Common myeloid progenitor, CD34-positive (primary cell): ENCODE measurements at regions of chr10 and their contacts with region 1.

Region 1: DNA sequence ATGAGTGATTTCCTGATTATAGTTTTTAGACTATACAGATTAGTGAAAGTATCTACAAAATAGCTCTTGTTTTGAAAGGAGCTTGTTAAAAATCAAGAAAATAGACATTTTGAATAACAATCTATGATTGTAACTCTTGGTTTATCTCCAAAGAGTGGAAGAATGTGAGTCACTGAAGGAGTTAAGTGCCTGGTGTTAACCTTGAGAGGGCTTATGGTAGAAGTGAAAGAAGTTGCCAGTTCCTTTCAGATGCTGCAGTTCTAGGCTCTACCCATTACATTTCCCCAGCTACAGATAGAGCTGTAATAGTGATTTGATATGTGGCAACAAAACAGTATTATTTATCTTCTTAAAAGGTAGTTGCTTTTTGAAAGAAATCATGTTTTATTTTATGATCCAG is 12.7 kb downstream of the NRBF2 start:
- DNase-seq: no peak
- H3K4me3 ChIP-seq: no peak overlapping the region
- H3K27ac ChIP-seq: no peak overlapping the region
- H3K4me1 ChIP-seq: no peaks in the 10 kb centered on the region
- H3K27me3 ChIP-seq: no peaks in the 10 kb centered on the region

Region 2: GRCh38 chr10:63133056-63133820 is 12.5 kb before region 1 on chr10 and contains the start of gene NRBF2:
- CTCF ChIA-PET with region 1: interaction called, 10 read pairs
- POLR2A ChIA-PET with region 1: interaction called, 4 read pairs
- DNase-seq: peak; percentile 98 to 99 (median 99)
- H3K4me3 ChIP-seq: peak within 1 kb of the TSS; percentile 67 to 94 (median 89)
- H3K27ac ChIP-seq: peak within 1 kb of the TSS; percentile 87 to 95
- H3K4me1 ChIP-seq: peaks cover 5 to 17% (median 10%) of the 10 kb centered on the region in 4 experiments
- H3K27me3 ChIP-seq: peaks cover 0 to 4% (median 0%) of the 10 kb centered on the region in 5 experiments